ENCODE measurements at regions of chr6 and their contacts with region 1.

Region 1: GRCh38 chr6:149473080-149474052 is 11.4 kb downstream of the ZC3H12D start:
- DNase-seq: no peak
- ATAC-seq: no peak

Region 2: DNA sequence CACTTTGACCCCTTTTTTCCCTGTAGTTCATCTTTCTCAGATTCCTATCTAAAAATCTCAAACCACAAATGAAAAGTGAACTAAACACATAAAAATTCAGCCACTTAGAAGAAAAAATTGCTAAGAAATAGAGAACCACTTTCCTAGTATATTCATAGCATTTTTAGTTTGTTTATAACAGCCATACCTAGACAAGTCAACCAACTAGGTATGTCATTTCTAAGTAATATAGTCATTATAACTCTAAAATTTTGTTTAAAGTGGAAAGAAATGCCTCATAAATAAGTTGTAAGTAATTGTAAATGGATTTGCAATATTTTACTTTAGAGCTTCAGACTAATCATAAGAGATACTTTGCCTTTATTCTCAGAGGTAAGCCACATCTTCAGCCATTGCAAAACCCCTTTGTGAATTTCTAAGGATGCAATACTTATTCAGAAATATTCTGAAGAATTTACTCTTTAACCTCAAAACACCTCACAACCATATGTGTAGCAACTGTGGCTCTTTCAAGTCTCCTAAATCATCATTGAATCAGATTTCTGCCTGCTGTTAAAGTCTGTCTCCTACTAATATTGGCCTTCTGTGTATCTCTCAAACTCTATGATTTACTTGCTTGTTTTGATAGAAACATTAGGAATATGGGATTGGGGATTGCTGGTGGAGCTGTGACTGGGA is 80.2 kb before region 1 on chr6:
- intact Hi-C with region 1: loop called (anchors 2 kb)
- DNase-seq: no peak
- ATAC-seq: no peak